ENCODE measurements at regions of chr15 and their contacts with region 1.

Region 1: DNA sequence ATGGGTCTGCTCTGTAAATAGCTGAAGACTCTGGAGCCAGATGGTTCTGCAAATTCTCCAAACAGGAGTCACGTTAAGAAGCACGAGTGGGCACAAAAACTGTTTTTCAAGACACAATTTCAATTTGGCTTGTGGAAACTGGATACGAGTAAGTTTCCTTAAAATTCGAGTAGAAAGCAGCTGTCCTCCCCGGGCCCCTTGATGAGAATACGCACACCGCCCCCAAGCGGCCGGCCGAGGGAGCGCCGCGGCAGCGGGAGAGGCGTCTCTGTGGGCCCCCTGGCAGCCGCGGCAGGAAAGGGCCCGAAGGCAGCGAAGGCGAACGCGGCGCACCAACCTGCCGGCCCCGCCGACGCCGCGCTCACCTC is 778 bp upstream of the THBS1 start:
- DNase-seq: peak; percentile 81
- H3K4me3 Mint-ChIP-seq: peak overlapping the region; percentile 41
- H3K27ac Mint-ChIP-seq: no peak overlapping the region
- H3K4me1 Mint-ChIP-seq: peaks cover 16% of the 10 kb centered on the region
- H3K27me3 Mint-ChIP-seq: peaks cover 53% of the 10 kb centered on the region

Region 2: GRCh38 chr15:38707802-38708671 is 872.1 kb before region 1 on chr15:
- intact Hi-C with region 1: loop called (anchors 5 kb)
- DNase-seq: no peak
- H3K4me3 Mint-ChIP-seq: no peak overlapping the region
- H3K27ac Mint-ChIP-seq: no peak overlapping the region
- H3K4me1 Mint-ChIP-seq: peaks cover 6% of the 10 kb centered on the region
- H3K27me3 Mint-ChIP-seq: peaks cover 12% of the 10 kb centered on the region

Region 3: GRCh38 chr15:38817427-38818156 is 762.5 kb before region 1 on chr15:
- intact Hi-C with region 1: loop called (anchors 2 kb)
- DNase-seq: peak; percentile 70
- H3K4me3 Mint-ChIP-seq: no peak overlapping the region
- H3K27ac Mint-ChIP-seq: no peak overlapping the region
- H3K4me1 Mint-ChIP-seq: peaks cover 4% of the 10 kb centered on the region
- H3K27me3 Mint-ChIP-seq: peaks cover 15% of the 10 kb centered on the region

Region 4: GRCh38 chr15:39125904-39126303 is 454.2 kb before region 1 on chr15:
- intact Hi-C with region 1: loop called (anchors 1 kb)
- DNase-seq: peak; percentile 15
- H3K4me3 Mint-ChIP-seq: no peak overlapping the region
- H3K27ac Mint-ChIP-seq: no peak overlapping the region
- H3K4me1 Mint-ChIP-seq: peaks cover 20% of the 10 kb centered on the region
- H3K27me3 Mint-ChIP-seq: peaks cover 11% of the 10 kb centered on the region

Region 5: DNA sequence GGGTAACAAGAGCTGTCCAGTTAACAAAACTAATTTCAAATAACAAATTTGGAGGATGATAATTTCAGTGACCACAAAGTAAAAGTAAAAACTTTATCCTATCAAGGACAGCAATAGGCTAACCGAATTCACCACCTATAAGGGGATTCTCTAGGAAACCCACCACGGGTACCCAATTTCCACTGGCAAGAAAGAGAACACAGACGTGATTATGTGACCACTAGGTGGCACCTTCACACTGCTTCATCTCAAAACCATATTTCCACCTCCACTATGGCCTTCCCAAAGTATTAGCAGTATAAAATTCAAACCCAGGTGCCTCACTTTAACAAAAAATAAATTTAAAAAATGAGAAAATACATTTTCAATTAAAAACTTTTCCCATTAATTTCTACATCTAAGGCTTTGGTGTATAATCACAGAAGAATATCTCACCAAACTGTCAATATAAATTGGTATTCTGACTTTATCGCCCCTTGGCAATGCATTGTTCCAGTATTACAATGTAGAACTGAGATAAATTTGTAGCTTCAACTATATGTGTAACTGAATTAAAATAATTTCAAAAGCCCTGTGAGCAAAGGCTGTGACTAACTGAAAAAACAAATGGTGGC is 106.0 kb after region 1 on chr15:
- intact Hi-C with region 1: loop called (anchors 5 kb)
- DNase-seq: no peak
- H3K4me3 Mint-ChIP-seq: no peak overlapping the region
- H3K27ac Mint-ChIP-seq: no peak overlapping the region
- H3K4me1 Mint-ChIP-seq: peaks cover 7% of the 10 kb centered on the region
- H3K27me3 Mint-ChIP-seq: peaks cover 12% of the 10 kb centered on the region

Region 6: GRCh38 chr15:39756806-39757522 is 176.9 kb after region 1 on chr15:
- intact Hi-C with region 1: loop called (anchors 2 kb)
- DNase-seq: no peak
- H3K4me3 Mint-ChIP-seq: no peak overlapping the region
- H3K27ac Mint-ChIP-seq: no peak overlapping the region
- H3K4me1 Mint-ChIP-seq: no peaks in the 10 kb centered on the region
- H3K27me3 Mint-ChIP-seq: peaks cover 59% of the 10 kb centered on the region

Measured in activated T-helper 2 cell treated with anti-CD3 and anti-CD28 coated beads, Interferon-gamma antibody, Interleukin-2, Interleukin-4, amounts not matched to agents 10 μg/mL and 5 μg/mL and 100 μg/mL, durations not matched to agents 14 hours and 24 hours and 36 hours (primary cell).